Activated B cell treated with CpG ODN at 0.5 μM for 24 hours (primary cell): ENCODE measurements at regions of chr15 and their contacts with region 1.

Region 1: GRCh38 chr15:78056714-78057269 is 20.7 kb downstream of the TBC1D2B start:
- DNase-seq: peak; percentile 42
- ATAC-seq: peak; percentile 88
- H3K4me3 Mint-ChIP-seq: peak overlapping the region; percentile 52
- H3K27ac Mint-ChIP-seq: peak overlapping the region; percentile 79
- H3K4me1 Mint-ChIP-seq: peaks cover 74% of the 10 kb centered on the region
- H3K27me3 Mint-ChIP-seq: no peaks in the 10 kb centered on the region
- CTCF ChIP-seq: no peak

Region 2: DNA sequence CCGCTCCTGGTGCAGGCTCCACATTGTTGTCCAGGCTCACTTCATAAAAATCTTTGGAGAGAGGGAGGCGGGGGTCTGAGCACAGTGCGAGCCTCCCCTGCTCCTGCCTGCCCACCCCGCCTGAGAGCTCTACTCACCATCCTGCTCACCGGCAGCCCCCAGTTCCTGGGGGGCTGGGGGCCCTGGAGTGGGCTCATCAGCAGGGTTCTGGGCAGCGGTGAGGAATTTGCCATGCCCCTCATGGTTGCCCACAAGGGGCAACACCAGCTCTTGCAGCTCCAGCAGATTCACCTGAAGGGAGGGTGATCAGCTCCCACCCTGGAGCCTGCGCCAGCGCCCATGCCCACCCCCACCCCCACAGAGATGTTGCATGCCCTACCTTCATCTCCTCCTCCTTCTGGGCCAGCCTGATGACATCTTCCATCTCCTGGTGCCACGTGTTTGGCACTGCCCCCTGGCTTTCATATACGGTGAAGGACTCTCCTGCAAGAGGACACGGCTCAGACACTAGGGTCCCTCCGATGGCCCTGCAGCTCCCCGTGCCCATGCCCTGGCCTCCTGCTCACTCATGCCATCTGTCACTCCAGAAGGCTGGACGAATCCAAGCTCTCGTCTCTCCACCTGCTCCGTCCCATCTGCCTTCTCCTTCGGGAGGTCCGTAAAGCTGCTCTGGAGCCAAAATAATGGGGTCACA is 141.4 kb before region 1 on chr15:
- CTCF ChIA-PET with region 1: no interaction called
- POLR2A ChIA-PET with region 1: no interaction called
- intact Hi-C with region 1: no loop called
- DNase-seq: no peak
- ATAC-seq: no peak
- H3K4me3 Mint-ChIP-seq: no peak overlapping the region
- H3K27ac Mint-ChIP-seq: no peak overlapping the region
- H3K4me1 Mint-ChIP-seq: no peaks in the 10 kb centered on the region
- H3K27me3 Mint-ChIP-seq: peaks cover 9% of the 10 kb centered on the region
- CTCF ChIP-seq: no peak

Region 3: DNA sequence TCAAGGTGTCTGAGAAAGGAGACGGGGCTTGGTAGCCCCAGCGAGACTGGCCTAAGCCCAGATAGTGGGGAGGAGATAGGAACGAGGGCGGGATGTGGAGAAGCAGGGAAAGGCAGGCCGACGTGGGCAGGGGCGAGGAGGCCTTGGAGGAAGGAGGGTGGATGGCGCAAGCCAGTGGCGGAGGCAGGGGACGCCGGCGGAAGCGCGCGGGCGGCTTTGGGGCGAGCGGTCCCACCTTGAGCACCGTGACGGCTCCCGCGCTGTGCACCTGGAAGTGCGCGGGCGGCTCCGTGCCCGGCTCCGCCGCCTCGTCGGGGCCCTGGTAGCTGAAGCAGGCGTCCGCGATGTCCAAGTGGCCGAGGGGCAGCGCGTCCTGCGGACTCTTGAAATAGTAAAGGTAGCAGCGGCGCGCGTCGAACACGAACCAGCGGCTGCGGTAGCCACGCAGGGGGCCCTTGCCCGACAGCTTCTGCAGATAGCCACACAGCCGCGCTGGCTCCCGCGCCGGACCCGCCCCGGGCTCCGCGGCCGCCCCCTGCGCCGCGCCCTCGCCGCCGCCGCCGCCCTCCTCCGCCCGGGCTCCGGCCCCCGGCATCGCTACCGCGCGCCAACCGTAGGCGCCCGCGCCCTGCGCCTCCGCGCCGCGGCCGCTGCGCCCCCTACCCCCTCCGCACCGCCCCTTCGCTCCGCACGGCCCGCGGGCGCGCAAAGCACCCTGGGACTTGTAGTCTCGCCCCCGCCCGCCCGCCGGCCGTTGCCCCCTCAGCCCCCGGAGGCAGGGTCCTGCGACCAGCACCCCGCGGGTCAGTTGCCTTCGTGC is 20.5 kb after region 1 on chr15 and contains the start of gene TBC1D2B:
- CTCF ChIA-PET with region 1: interaction called, 3 read pairs
- POLR2A ChIA-PET with region 1: no interaction called
- intact Hi-C with region 1: loop called (anchors 2 kb)
- DNase-seq: peak; percentile 68
- ATAC-seq: peak; percentile 91
- H3K4me3 Mint-ChIP-seq: peak within 1 kb of the TSS; percentile 92
- H3K27ac Mint-ChIP-seq: peak within 1 kb of the TSS; percentile 68
- H3K4me1 Mint-ChIP-seq: peaks cover 27% of the 10 kb centered on the region
- H3K27me3 Mint-ChIP-seq: no peaks in the 10 kb centered on the region
- CTCF ChIP-seq: no peak
- total RNA-seq, gene TBC1D2B: 12.9 and 13.7 TPM in 2 replicates